PC-3 (cell line): ENCODE measurements at regions of chr2 and their contacts with region 1.

Region 1: GRCh38 chr2:45611020-45611737 is at the start of gene SRBD1:
- DNase-seq: peak; percentile 98
- ATAC-seq: peak; percentile 97
- H3K4me3 ChIP-seq: peak within 1 kb of the TSS; percentile 85
- H3K27ac ChIP-seq: peak within 1 kb of the TSS; percentile 87
- H3K4me1 ChIP-seq: peaks cover 23% of the 10 kb centered on the region
- H3K27me3 ChIP-seq: no peaks in the 10 kb centered on the region
- CTCF ChIP-seq: no peak
- total RNA-seq, gene SRBD1: 19.8 and 20.8 TPM in 2 replicates

Region 2: DNA sequence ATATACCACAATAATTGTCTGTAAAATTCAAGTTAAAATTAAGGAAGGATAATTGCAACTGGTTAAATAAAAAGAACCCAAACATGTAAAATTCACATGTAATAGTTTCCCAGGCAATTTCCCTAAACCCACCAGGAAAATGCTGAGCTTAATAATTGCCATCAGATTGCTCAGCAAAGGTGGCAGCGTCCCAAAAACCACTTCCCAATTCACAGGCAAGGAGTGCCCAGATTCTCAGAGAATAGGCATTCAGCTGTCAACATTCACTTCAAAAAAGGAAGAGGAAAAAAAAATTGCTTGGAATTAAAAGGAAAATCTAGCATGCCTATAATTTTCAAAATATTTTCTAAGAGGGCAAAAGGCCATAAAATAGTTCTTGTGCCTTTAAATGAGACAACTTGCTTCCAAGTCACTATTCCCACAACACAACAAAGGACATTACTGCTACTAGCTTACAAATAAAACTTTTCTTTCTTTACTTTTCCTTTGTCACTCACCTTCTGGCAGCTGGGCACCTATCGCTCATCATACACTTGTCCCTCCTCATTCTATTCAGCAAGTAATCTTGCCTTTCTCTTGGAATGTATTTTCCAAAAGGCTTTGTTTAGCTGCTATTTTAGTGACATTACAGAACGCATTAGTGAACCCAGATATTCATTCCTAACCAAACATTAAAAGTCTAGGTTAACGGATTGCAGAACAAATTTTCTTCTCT is 15.3 kb before region 1 on chr2:
- CTCF ChIA-PET with region 1: no interaction called
- POLR2A ChIA-PET with region 1: no interaction called
- intact Hi-C with region 1: loop called (anchors 2 kb)
- DNase-seq: peak; percentile 90
- ATAC-seq: peak; percentile 92
- H3K4me3 ChIP-seq: peak overlapping the region; percentile 18; the same call in 1 of the 2 replicates
- H3K27ac ChIP-seq: peak overlapping the region; percentile 45
- H3K4me1 ChIP-seq: peaks cover 21% of the 10 kb centered on the region
- H3K27me3 ChIP-seq: no peaks in the 10 kb centered on the region
- CTCF ChIP-seq: no peak

Region 3: GRCh38 chr2:45637440-45637839 is 26.3 kb after region 1 on chr2:
- CTCF ChIA-PET with region 1: no interaction called
- POLR2A ChIA-PET with region 1: no interaction called
- intact Hi-C with region 1: no loop called
- DNase-seq: peak; percentile 85
- ATAC-seq: peak; percentile 87
- H3K4me3 ChIP-seq: no peak overlapping the region
- H3K27ac ChIP-seq: no peak overlapping the region
- H3K4me1 ChIP-seq: peaks cover 11% of the 10 kb centered on the region
- H3K27me3 ChIP-seq: no peaks in the 10 kb centered on the region
- CTCF ChIP-seq: no peak

Region 4: DNA sequence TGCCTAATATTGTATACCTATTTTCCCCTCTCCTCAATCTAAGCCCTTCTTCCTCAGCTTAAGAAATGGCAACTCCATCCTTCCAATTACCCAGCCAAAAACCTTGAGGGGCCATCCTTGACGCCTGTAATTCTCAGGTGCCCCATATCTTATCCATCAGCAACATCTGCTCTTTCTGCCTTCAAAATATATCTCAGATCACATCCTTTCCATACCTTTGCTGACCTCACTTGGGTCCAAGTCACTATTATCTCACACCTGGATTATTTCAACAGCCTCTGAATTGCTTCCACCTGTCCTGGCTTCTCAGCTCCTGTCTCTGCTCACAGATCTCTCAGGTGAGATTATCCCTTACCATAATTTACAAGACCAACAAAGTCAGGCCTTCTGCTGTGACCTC is 48.0 kb after region 1 on chr2:
- CTCF ChIA-PET with region 1: no interaction called
- POLR2A ChIA-PET with region 1: no interaction called
- intact Hi-C with region 1: no loop called
- DNase-seq: no peak
- ATAC-seq: no peak
- H3K4me3 ChIP-seq: no peak overlapping the region
- H3K27ac ChIP-seq: no peak overlapping the region
- H3K4me1 ChIP-seq: no peaks in the 10 kb centered on the region
- H3K27me3 ChIP-seq: no peaks in the 10 kb centered on the region
- CTCF ChIP-seq: no peak

Region 5: GRCh38 chr2:45712570-45712969 is 101.4 kb after region 1 on chr2:
- CTCF ChIA-PET with region 1: no interaction called
- POLR2A ChIA-PET with region 1: no interaction called
- intact Hi-C with region 1: no loop called
- DNase-seq: peak; percentile 38
- ATAC-seq: peak; percentile 58
- H3K4me3 ChIP-seq: no peak overlapping the region
- H3K27ac ChIP-seq: no peak overlapping the region
- H3K4me1 ChIP-seq: peaks cover 15% of the 10 kb centered on the region
- H3K27me3 ChIP-seq: no peaks in the 10 kb centered on the region
- CTCF ChIP-seq: peak; percentile 32; the same call in 1 of the 2 replicates